Ovary (tissue), 10 donors: ENCODE measurements at regions of chr1 and their contacts with region 1.

Region 1: DNA sequence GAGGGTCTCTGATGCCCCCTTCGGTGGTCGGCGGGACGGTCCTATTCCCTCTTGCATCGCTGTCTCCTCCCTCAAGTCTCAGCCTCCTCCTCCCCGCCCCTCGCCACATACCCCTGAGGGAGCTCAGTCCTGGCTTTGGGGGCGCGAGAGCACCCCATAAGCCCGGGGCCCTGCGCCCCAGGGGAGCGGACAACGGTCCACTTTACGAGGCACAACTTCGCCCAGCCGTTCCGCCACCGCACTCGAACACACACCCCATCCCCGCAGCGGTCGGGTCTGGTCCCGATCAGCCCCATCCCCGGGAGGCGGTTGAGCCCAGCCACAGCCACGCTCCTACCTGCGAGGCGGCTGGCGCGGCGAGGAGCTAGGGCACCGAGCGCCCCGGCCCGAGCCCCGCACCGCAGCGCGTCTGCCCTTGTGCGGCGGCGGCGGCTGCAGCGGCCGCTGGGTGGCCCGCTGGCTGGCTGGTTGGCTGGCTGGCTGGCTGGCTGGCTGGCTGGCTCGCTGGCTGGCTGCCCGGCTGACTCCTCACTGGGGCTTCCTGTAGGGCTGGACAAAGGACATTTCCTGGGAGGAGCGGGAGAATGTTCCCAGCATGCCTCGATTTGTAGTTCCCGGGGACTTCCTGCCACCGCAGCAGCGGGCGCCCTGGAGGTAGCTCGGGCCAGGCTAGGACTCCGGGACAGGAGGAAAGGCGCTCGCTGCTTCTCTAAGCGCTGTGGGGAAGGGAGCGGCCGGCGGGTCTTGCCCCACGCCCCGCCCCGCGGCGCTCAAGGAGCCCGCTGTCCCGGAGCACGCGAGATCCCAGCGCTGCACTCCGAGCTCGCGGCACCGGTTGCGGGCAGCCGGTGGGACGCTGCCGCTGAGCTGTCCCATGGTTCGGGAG is at the start of gene ZNF697:
- DNase-seq: peak; percentile 96 to 98 (median 97)
- H3K4me3 ChIP-seq: peak within 1 kb of the TSS; percentile 65
- H3K27ac ChIP-seq: peak within 1 kb of the TSS; percentile 62 to 73
- H3K4me1 ChIP-seq: peaks cover 8% of the 10 kb centered on the region
- H3K27me3 ChIP-seq: no peaks in the 10 kb centered on the region
- CTCF ChIP-seq: peak in 2 of 3 donors; percentile 31 to 42
- EP300 ChIP-seq: no peak
- POLR2A ChIP-seq: peak; percentile 60
- total RNA-seq, gene ZNF697: 3.0 to 9.1 (median 6.7) TPM

Region 2: GRCh38 chr1:119631433-119632102 is 16.4 kb before region 1 on chr1:
- intact Hi-C with region 1: loop called in 1 of 4 experiments (anchors 2 kb)
- DNase-seq: peak; percentile 89 to 96 (median 91)
- H3K4me3 ChIP-seq: peak overlapping the region; percentile 24
- H3K27ac ChIP-seq: peak overlapping the region in 1 of 2 donors; percentile 28
- H3K4me1 ChIP-seq: peaks cover 26% of the 10 kb centered on the region
- H3K27me3 ChIP-seq: no peaks in the 10 kb centered on the region
- CTCF ChIP-seq: peak in 1 of 3 donors; percentile 19
- EP300 ChIP-seq: no peak
- POLR2A ChIP-seq: no peak

Region 3: GRCh38 chr1:119827010-119827409 is 179.0 kb after region 1 on chr1:
- intact Hi-C with region 1: no loop called
- DNase-seq: no peak
- H3K4me3 ChIP-seq: no peak overlapping the region
- H3K27ac ChIP-seq: no peak overlapping the region
- H3K4me1 ChIP-seq: no peaks in the 10 kb centered on the region
- H3K27me3 ChIP-seq: no peaks in the 10 kb centered on the region
- CTCF ChIP-seq: no peak
- EP300 ChIP-seq: no peak
- POLR2A ChIP-seq: no peak